Right cardiac atrium (tissue), 5 donors: ENCODE measurements at regions of chr7 and their contacts with region 1.

Region 1: DNA sequence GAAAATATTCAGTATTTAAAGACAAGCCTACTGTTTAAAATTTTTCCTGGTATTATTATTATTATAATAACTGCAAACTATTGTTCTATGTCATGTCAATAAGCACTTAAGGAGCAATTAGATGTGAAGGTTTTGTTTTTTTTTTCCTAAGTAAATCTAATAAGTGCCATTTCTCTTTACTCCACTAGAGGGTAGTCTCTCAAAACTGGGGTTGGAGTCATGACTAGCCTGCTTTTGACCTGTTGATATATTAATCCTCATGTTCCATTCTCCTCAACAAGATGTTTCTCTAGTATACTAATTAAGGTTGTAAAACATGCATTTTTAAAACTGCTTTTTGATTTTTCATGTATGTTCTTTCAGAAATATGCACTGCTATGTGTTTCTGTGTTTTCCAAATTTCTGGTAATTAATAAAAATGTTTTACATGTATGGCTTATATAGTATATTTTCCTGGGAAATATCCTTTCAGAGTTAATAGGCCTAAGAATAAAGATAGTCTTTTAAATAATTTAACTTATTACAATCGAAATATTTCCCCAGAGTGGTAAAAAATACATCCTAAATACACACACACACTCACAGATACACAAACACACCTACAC is 1.0 kb upstream of the LRRN3 start:
- DNase-seq: no peak
- ATAC-seq: peak; percentile 62 to 64
- H3K4me3 ChIP-seq: no peak overlapping the region
- H3K27ac ChIP-seq: no peak overlapping the region
- H3K4me1 ChIP-seq: peaks cover 3% of the 10 kb centered on the region
- H3K27me3 ChIP-seq: no peaks in the 10 kb centered on the region

Region 2: GRCh38 chr7:111370002-111370401 is 280.1 kb after region 1 on chr7:
- intact Hi-C with region 1: no loop called
- DNase-seq: no peak
- ATAC-seq: no peak
- H3K4me3 ChIP-seq: no peak overlapping the region
- H3K27ac ChIP-seq: no peak overlapping the region
- H3K4me1 ChIP-seq: no peaks in the 10 kb centered on the region
- H3K27me3 ChIP-seq: no peaks in the 10 kb centered on the region

Region 3: DNA sequence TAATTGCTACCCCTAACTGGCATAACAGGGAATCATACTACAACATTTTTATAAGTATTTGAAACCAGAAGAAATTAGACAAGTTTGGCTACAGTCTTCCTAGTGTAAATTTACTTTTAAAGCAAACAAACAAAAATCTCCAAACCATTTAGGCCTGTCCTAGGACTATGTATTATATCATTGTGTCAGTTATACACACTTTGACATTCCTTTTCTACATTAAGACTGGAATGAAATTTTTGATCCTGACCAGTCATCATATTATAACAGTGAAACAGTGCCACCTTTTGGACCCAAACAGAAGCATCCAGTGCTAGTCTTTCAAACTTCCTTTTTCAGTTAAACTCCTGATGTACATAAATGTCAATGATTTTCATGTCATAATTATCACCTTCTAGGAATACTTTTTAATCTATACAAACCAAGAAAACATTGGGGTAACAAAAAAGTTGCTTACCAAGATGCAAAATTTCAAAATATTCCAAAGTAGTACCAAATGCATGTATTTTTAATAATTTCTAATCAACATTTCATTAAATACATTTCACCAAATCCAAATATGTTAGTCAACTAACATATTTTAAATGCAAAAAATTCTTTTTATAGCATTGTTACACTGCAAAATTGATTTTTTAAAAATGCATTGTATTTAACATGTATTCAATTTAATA is 396.7 kb after region 1 on chr7:
- intact Hi-C with region 1: loop called in 3 of 4 experiments (anchors 10 kb)
- DNase-seq: no peak
- ATAC-seq: peak; percentile 62 to 67
- H3K4me3 ChIP-seq: no peak overlapping the region
- H3K27ac ChIP-seq: no peak overlapping the region
- H3K4me1 ChIP-seq: no peaks in the 10 kb centered on the region
- H3K27me3 ChIP-seq: no peaks in the 10 kb centered on the region